Heart right ventricle (tissue), 16 donors: ENCODE measurements at regions of chr9 and their contacts with region 1.

Region 1: GRCh38 chr9:130023144-130023787 is 19.7 kb downstream of the FNBP1 start:
- DNase-seq: no peak
- ATAC-seq: peak in 2 of 8 donors; percentile 38 to 44
- H3K4me3 ChIP-seq: no peak overlapping the region
- H3K27ac ChIP-seq: no peak overlapping the region
- H3K4me1 ChIP-seq: peaks cover 0 to 80% (median 22%) of the 10 kb centered on the region in 9 donors
- H3K27me3 ChIP-seq: no peaks in the 10 kb centered on the region
- CTCF ChIP-seq: no peak

Region 2: DNA sequence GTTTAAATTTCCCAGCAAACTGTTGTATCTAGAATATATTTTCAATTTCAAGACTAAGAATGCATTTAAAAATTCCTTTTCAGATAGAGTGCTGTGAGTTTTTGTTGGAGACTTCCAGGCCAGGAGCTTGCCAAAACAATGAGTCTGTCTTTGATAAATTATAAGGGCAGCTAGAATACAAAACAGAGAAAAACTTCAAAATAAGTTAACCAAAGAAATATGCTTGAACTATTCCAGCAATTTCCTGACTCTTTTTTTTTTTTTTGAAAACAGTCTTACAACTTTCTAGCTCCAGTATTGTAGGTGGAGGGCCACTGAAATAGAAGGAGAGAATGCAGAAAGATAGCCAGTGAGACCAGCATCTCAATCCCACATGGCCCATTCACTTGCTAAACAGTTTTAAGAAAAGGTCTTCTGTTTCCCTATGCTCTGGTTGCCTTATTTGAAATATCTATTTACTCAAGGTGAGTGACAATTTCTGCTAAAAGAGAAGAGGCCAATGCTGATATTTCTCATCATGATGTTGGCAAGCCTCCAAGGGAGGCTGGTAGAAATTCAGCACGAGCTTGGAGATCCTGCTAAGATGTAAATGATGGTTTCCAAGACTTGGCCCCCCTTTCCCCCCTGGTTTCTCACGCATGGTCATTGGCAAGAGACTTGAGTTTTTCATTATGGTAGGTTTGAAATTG is 84.8 kb before region 1 on chr9:
- intact Hi-C with region 1: no loop called
- DNase-seq: no peak
- ATAC-seq: peak in 3 of 8 donors; percentile 28 to 57 (median 33)
- H3K4me3 ChIP-seq: no peak overlapping the region
- H3K27ac ChIP-seq: peak overlapping the region in 8 of 10 donors; percentile 1 to 71 (median 52)
- H3K4me1 ChIP-seq: peaks cover 0 to 52% (median 29%) of the 10 kb centered on the region in 9 donors
- H3K27me3 ChIP-seq: no peaks in the 10 kb centered on the region
- CTCF ChIP-seq: no peak

Region 3: DNA sequence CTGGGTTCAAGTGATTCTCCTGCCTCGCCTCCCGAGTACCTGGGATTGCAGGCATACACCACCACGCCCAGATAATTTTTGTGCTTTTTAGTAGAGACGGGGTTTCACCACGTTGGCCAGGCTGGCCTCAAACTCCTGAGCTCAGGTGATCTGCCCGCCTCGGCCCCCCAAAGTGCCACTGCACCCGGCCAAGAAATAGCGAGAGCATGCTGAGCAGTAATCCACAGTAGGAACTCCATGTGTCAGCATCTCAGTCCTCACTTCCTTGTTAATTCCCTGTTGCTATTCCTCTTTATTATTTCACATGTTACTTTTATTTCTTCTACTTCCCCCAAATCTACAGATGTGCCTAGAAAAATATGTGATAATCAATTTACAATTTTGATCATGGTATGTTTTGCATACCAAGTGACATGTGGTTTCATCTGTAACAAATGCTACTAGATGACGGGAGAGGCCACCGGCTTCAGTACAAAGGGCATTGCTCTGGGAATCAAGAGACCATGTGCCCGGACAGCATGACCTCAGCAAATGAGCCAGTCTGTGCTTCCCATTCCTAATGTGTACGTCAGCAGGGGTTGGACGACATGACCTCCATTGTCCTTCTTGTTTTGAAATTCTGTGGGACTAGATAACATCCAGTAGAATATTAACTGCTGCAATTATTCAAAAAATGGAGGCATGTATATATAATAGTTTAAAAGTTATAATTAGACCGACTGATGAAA is 41.9 kb before region 1 on chr9:
- intact Hi-C with region 1: loop called in 2 of 10 experiments (anchors 5 to 10 kb)
- DNase-seq: peak in 1 of 2 donors; percentile 37
- ATAC-seq: peak in 6 of 8 donors; percentile 42 to 86 (median 75)
- H3K4me3 ChIP-seq: no peak overlapping the region
- H3K27ac ChIP-seq: peak overlapping the region in 1 of 10 donors; percentile 77
- H3K4me1 ChIP-seq: peaks cover 0 to 52% (median 0%) of the 10 kb centered on the region in 9 donors
- H3K27me3 ChIP-seq: no peaks in the 10 kb centered on the region
- CTCF ChIP-seq: no peak